ENCODE measurements at regions of chr4 and their contacts with region 1.

Region 1: DNA sequence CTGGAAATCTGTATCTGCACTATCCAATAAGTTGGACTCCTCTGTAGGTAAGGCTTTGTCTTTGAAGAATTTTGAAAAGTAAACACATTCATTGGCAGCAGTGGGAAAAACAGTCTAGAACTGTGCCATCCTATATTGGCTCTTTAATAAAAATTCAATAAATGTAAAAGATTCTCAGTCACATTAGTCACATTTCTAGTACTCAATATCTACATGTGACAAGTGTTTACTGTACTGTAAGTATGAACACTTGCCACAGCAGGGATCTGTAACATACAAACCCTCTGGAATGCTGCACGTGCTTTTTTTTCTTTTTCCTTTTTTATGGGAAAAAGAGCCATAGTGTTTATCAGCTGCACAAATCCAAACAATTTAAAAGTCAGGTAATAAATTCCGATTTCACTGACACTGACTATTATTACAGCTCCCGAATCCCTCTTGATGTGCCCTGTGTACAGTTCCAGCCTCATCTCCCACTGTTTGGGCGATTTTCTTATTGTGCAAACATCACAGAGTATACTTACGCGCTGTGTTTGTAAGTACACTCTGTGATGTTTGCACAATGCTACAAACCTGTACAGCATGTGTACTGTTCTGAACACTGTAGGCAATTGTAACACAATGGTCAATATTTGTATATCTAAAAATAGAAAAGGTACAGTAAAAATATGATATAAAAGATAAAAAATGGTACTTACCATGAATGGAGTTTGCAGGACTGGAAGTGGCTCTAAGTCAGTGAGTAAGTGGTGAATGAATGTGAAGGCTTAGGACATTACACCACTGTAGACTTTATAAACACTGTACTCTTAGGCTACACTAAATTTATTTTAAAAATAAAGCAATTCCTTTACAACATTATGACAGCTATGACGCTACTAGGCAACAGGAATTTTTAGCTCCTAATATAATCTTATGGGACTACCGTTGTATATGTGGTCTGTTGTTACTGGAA is 8.7 kb downstream of the PYURF start:
- DNase-seq: no peak
- ATAC-seq: no peak
- H3K4me3 ChIP-seq: no peak overlapping the region
- H3K27ac ChIP-seq: no peak overlapping the region
- H3K4me1 ChIP-seq: no peaks in the 10 kb centered on the region
- H3K27me3 ChIP-seq: no peaks in the 10 kb centered on the region

Region 2: DNA sequence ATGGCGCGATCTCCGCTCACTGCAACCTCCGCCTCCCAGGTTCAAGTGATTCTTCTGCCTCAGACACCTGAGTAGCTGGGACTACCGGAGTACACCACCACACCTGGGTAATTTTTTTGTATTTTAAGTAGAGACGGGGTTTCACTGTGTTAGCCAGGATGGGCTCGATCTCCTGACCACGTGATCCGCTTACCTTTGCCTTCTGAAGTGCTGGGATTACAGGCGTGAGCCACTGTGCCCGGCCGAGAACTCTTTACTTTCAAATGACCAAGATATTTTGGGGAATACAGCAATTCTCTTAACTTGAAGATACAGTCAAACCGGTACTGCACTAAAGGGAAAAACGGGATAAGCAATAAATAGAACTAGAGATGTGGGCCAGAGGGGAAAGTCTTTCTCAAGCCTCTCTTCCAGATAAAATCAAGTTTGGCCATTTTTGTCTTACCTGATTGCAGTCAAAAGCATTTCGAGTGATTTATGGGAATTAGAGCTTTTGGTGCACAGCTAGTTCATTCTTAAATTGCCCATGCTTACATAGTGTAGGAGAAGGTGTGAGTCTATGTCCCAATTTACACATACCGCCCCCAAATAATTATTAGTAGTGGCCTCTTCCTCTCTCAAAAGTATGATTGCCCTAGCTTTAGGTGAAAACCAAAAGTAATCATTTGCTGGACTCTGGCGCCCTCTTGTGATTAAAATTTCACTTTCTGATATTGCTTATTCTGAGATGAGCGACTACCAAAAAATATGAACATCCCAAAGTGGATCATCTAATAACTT is 303.2 kb before region 1 on chr4:
- intact Hi-C with region 1: loop called in 1 of 4 experiments (anchors 5 kb)
- DNase-seq: no peak
- ATAC-seq: peak in 1 of 2 donors; percentile 49
- H3K4me3 ChIP-seq: no peak overlapping the region
- H3K27ac ChIP-seq: no peak overlapping the region
- H3K4me1 ChIP-seq: no peaks in the 10 kb centered on the region
- H3K27me3 ChIP-seq: no peaks in the 10 kb centered on the region

Region 3: DNA sequence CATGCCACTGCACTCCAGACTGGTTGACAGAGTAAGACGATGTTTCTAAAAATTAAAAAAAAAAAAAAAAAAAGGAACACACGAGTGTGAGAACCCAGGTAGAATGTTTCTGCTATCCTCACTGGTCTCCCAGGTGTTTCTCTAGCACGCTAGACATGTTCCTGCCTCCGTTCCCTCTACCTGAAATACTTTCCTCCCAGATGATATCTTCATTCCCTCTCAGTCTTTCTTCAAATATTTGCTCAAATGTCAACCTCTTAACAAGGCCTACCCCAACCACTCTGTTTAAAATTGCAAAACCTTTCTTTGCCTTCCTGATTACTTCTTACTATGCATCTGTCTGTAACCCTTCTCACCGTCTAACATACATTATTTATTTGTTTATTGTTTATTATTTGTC is 296.9 kb before region 1 on chr4:
- intact Hi-C with region 1: loop called (anchors 2 to 5 kb)
- DNase-seq: no peak
- ATAC-seq: no peak
- H3K4me3 ChIP-seq: no peak overlapping the region
- H3K27ac ChIP-seq: no peak overlapping the region
- H3K4me1 ChIP-seq: no peaks in the 10 kb centered on the region
- H3K27me3 ChIP-seq: no peaks in the 10 kb centered on the region

Region 4: GRCh38 chr4:88225232-88226105 is 289.4 kb before region 1 on chr4:
- intact Hi-C with region 1: loop called in 2 of 4 experiments (anchors 2 to 5 kb)
- DNase-seq: no peak
- ATAC-seq: peak; percentile 26 to 41
- H3K4me3 ChIP-seq: no peak overlapping the region
- H3K27ac ChIP-seq: peak overlapping the region; percentile 6
- H3K4me1 ChIP-seq: peaks cover 2% of the 10 kb centered on the region
- H3K27me3 ChIP-seq: no peaks in the 10 kb centered on the region

Region 5: DNA sequence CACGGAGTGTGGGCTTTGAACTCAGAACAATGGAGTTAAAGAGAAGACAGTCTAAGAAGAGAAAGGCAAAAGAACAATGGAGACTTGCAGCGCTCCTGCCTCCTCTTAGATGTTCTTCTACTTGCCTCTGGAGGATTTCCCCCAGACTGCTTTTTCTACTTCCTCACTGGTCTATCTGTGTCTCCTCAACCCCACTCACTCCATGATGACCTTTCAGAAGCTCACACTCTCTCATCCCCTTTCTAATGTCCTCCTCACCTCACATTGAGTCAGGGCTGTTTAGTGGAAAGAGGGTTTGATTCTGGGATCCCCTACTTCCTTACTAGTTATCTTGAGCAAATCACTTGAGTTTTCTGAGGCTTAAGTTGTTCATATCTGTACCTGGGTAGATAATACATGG is 148.4 kb before region 1 on chr4:
- intact Hi-C with region 1: loop called in 2 of 4 experiments (anchors 5 to 10 kb)
- DNase-seq: no peak
- ATAC-seq: no peak
- H3K4me3 ChIP-seq: no peak overlapping the region
- H3K27ac ChIP-seq: no peak overlapping the region
- H3K4me1 ChIP-seq: no peaks in the 10 kb centered on the region
- H3K27me3 ChIP-seq: no peaks in the 10 kb centered on the region

Region 6: DNA sequence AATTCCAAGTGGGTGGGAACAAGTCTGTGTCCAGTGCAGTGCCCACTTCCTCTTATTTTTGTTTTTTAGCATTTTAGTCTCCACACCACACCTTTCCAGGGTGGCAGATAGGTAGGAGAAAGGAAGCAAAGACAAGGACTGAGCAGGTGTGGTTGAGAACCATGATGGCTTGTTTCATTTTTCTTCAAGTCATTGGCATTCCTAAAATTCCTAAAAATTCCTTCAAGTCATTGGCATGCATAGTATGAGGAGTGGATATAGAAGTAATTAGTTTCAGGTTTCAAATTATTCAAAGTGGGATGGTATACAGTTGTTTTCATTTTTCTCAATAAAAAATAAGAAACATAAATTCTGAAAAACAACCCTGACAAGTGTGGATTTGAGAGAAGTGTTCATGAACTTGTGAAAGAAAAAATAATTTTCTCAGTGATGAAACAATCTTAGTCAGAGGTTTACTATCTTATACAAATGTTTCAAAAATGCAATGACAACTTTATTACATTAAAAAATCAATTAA is 55.2 kb after region 1 on chr4:
- intact Hi-C with region 1: no loop called
- DNase-seq: no peak
- ATAC-seq: no peak
- H3K4me3 ChIP-seq: no peak overlapping the region
- H3K27ac ChIP-seq: no peak overlapping the region
- H3K4me1 ChIP-seq: no peaks in the 10 kb centered on the region
- H3K27me3 ChIP-seq: no peaks in the 10 kb centered on the region